Thyroid gland (tissue), 4 donors: ENCODE measurements at regions of chr1 and their contacts with region 1.

Region 1: DNA sequence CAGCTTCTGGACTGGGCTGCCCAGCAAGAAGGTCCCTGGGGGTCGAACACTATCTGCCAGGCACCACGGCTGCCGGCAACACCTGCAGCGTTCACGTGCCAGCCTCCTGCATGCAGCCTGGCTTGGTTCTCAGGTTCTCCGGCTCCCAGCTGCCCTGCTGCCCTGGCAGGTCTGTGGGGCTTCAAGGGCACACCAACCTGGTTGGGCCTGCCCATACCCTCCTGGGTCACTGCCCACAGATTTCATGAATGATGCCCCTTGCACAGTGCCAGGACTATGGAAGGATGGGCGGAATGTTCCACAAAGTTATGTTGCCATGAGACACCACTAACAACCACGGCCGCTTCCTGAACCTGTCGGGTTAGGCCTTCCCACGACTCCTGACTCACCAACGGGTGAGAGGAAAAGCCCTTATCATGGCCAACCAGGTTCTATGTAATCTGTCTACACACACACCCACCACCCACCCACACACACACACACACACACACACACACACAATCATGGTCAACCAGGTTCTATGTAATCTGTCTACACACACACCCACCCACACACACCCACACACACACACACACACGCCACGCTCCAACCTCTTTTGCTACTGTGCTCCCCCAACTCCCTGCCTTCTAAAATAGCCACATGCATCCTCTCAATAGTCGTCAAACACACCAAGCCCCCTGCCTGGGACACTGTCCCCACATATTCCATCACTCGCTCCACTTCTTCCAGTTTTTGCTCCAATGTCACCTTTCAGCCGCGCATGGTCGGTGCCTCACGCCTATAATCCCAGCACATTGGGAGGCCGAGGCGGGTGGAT is 32.2 kb downstream of the HSPG2 start:
- DNase-seq: no peak
- H3K4me3 ChIP-seq: no peak overlapping the region
- H3K27ac ChIP-seq: peak overlapping the region in 2 of 3 donors; percentile 48 to 81
- H3K4me1 ChIP-seq: peaks cover 19 to 86% of the 10 kb centered on the region in 2 donors
- H3K27me3 ChIP-seq: no peaks in the 10 kb centered on the region
- CTCF ChIP-seq: no peak
- POLR2A ChIP-seq: no peak

Region 2: GRCh38 chr1:21937372-21938221 is 32.7 kb after region 1 on chr1:
- intact Hi-C with region 1: loop called (anchors 5 kb)
- DNase-seq: peak; percentile 86 to 88
- H3K4me3 ChIP-seq: peak overlapping the region in 2 of 3 donors; percentile 26 to 41
- H3K27ac ChIP-seq: peak overlapping the region; percentile 63 to 73 (median 71)
- H3K4me1 ChIP-seq: peaks cover 53 to 66% of the 10 kb centered on the region in 2 donors
- H3K27me3 ChIP-seq: no peaks in the 10 kb centered on the region
- CTCF ChIP-seq: no peak
- POLR2A ChIP-seq: no peak